Panc1 (cell line): ENCODE measurements at regions of chr1 and their contacts with region 1.

Region 1: GRCh38 chr1:21255278-21255942 is 34.9 kb downstream of the ECE1 start:
- DNase-seq: no peak
- ATAC-seq: peak; percentile 95
- H3K4me3 ChIP-seq: no peak overlapping the region
- H3K27ac ChIP-seq: no peak overlapping the region
- H3K4me1 ChIP-seq: peaks cover 19% of the 10 kb centered on the region
- H3K27me3 ChIP-seq: no peaks in the 10 kb centered on the region
- CTCF ChIP-seq: peak; percentile 92

Region 2: DNA sequence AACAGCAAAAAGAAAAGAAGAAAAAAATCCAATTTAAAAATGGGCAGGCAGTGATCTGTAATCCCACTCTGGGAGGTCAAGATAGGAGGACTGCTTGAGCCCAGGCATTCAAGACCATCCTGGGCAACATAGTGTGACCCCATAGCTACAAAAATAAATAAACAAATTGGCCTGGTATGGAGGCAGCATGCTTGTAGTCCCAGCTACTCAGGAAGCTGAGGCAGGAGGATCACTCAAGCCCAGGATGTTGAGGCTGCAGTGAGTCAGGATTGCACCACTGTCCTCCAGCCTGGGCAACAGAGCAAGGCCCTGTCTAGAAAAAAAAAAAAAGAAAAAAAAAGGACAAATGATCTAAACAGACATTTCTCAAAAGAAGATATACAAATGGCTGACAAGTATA is 178.3 kb before region 1 on chr1:
- CTCF ChIA-PET with region 1: no interaction called
- POLR2A ChIA-PET with region 1: no interaction called
- in situ Hi-C with region 1: no loop called
- intact Hi-C with region 1: no loop called
- DNase-seq: no peak
- ATAC-seq: no peak
- H3K4me3 ChIP-seq: no peak overlapping the region
- H3K27ac ChIP-seq: no peak overlapping the region
- H3K4me1 ChIP-seq: no peaks in the 10 kb centered on the region
- H3K27me3 ChIP-seq: no peaks in the 10 kb centered on the region
- CTCF ChIP-seq: no peak

Region 3: DNA sequence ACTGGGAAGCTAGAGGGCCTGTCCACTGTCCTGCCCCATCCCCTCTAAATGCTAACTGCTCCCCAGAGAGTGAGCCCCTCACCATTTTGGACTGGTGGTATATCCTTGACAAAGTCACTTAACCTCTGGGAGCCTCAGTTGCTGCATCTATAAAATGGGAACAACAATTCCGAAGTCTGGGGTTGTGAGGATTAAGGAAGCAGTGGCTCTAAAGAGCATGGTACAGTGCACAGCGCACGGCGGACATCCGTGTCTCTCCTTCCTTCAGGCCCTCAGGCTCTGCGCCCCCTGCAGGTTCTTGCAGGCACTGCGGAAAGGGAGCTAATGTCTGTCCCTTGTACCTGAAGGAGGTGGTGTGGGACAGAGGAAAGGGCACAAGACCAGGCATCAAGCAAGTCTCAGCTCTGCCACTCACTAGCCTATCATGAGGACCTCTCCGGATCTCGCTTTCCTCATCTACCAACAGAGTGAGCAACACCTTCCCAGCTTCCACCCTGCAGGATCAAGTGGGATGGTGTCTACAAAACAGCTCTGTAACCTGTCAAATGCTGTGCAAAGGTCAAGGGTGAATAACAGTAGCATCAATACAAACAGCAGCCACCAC is 14.8 kb after region 1 on chr1:
- CTCF ChIA-PET with region 1: interaction called, 12 read pairs
- POLR2A ChIA-PET with region 1: no interaction called
- in situ Hi-C with region 1: no loop called
- intact Hi-C with region 1: no loop called
- DNase-seq: peak; percentile 67
- ATAC-seq: peak; percentile 83
- H3K4me3 ChIP-seq: no peak overlapping the region
- H3K27ac ChIP-seq: no peak overlapping the region
- H3K4me1 ChIP-seq: no peaks in the 10 kb centered on the region
- H3K27me3 ChIP-seq: no peaks in the 10 kb centered on the region
- CTCF ChIP-seq: peak; percentile 96

Region 4: GRCh38 chr1:21292503-21292983 is 37.1 kb after region 1 on chr1:
- CTCF ChIA-PET with region 1: interaction called, 16 read pairs
- POLR2A ChIA-PET with region 1: no interaction called
- in situ Hi-C with region 1: no loop called
- intact Hi-C with region 1: no loop called
- DNase-seq: no peak
- ATAC-seq: no peak
- H3K4me3 ChIP-seq: no peak overlapping the region
- H3K27ac ChIP-seq: peak overlapping the region; percentile 54
- H3K4me1 ChIP-seq: peaks cover 52% of the 10 kb centered on the region
- H3K27me3 ChIP-seq: no peaks in the 10 kb centered on the region
- CTCF ChIP-seq: no peak

Region 5: GRCh38 chr1:21324368-21325141 is 69.1 kb after region 1 on chr1:
- CTCF ChIA-PET with region 1: interaction called, 17 read pairs
- POLR2A ChIA-PET with region 1: no interaction called
- in situ Hi-C with region 1: no loop called
- intact Hi-C with region 1: no loop called
- DNase-seq: no peak
- ATAC-seq: peak; percentile 79
- H3K4me3 ChIP-seq: peak overlapping the region in 1 of 2 experiments; percentile 38; a peak in 2 of 4 replicates
- H3K27ac ChIP-seq: peak overlapping the region; percentile 97
- H3K4me1 ChIP-seq: peaks cover 91% of the 10 kb centered on the region
- H3K27me3 ChIP-seq: no peaks in the 10 kb centered on the region
- CTCF ChIP-seq: no peak

Region 6: DNA sequence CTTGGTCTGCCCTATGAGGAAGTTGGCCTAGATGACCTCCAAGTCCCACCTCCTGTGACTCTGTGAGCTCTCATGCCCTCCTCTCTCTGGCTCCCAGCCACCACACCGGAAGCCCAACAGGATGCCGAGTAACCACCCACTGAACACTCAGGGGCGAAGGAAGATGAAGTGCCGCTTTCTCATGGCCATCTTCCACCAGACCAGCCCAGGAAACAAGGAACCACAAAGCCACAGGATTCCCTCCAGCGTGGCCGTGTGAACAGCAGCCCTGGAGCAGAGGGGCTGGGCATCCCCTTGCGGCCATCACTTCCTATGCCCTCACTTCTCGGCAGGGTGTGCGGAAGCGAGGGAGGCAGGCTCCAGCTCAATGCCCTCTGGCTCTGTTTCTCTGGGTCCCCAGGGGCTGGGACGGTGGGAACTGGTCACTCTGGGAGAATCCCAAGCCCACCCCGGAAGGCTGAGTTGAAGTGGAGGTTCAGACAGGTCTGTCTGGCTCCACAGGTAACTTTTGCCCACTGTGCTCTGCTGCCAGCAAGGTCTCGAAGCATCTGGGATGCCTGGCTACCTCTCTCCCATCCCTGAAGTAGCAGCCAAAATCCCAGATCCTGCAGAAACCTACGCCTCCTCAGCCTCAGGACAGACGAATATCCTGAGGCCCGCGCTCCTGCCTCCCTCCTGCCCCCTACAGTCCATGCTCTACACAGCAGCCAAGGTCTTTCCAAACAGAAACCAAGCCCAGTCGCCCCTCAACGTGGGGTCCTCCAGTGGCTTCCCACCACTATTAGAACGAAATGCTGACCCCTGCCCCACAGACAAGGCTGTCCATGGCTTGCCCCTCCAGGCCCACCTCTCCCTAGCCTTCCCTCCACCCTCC is 79.0 kb after region 1 on chr1:
- CTCF ChIA-PET with region 1: interaction called, 12 read pairs
- POLR2A ChIA-PET with region 1: interaction called, 3 read pairs
- in situ Hi-C with region 1: no loop called
- intact Hi-C with region 1: no loop called
- DNase-seq: no peak
- ATAC-seq: peak; percentile 87
- H3K4me3 ChIP-seq: peak overlapping the region; percentile 29 to 50
- H3K27ac ChIP-seq: peak overlapping the region; percentile 96
- H3K4me1 ChIP-seq: peaks cover 80% of the 10 kb centered on the region
- H3K27me3 ChIP-seq: no peaks in the 10 kb centered on the region
- CTCF ChIP-seq: peak; percentile 95

Region 7: DNA sequence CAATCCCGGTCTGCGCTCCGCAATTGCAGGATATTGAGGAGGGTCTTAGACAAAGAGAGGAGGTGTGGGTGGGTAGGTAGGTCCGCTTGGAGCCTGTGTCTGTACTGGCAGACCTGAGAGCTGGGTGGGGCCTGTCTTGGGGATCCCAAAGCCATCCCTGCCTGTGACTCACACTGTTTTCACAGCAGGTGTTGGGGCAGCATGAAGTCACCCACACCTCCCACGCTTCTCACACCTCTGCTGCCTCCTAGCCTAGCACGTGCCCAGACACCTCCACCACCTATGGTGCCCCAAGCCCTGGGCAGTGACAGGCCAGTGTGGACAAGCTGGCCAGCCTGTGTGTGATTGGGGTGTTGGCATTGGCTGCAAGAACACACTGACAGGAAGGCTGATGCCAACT is 100.5 kb after region 1 on chr1:
- CTCF ChIA-PET with region 1: interaction called, 11 read pairs
- POLR2A ChIA-PET with region 1: no interaction called
- in situ Hi-C with region 1: no loop called
- intact Hi-C with region 1: no loop called
- DNase-seq: no peak
- ATAC-seq: no peak; the same call in 1 of the 2 replicates
- H3K4me3 ChIP-seq: no peak overlapping the region
- H3K27ac ChIP-seq: no peak overlapping the region
- H3K4me1 ChIP-seq: no peaks in the 10 kb centered on the region
- H3K27me3 ChIP-seq: no peaks in the 10 kb centered on the region
- CTCF ChIP-seq: no peak